HepG2 (cell line): ENCODE measurements at regions of chr6 and their contacts with region 1.

Region 1: GRCh38 chr6:63705707-63706106 is 70.1 kb downstream of the PHF3 start:
- DNase-seq: no peak
- ATAC-seq: no peak
- H3K4me3 ChIP-seq: no peak overlapping the region
- H3K27ac ChIP-seq: no peak overlapping the region
- H3K4me1 ChIP-seq: peaks cover 23% of the 10 kb centered on the region
- H3K27me3 ChIP-seq: no peaks in the 10 kb centered on the region
- CTCF ChIP-seq: no peak
- EP300 ChIP-seq: no peak
- POLR2A ChIP-seq: no peak
- RAD21 ChIP-seq: no peak

Region 2: GRCh38 chr6:63685446-63686379 is 20.0 kb before region 1 on chr6:
- CTCF ChIA-PET with region 1: no interaction called
- POLR2A ChIA-PET with region 1: no interaction called
- in situ Hi-C with region 1: no loop called
- intact Hi-C with region 1: loop called (anchors 2 kb)
- DNase-seq: no peak
- ATAC-seq: no peak
- H3K4me3 ChIP-seq: no peak overlapping the region
- H3K27ac ChIP-seq: no peak overlapping the region
- H3K4me1 ChIP-seq: no peaks in the 10 kb centered on the region
- H3K27me3 ChIP-seq: no peaks in the 10 kb centered on the region
- CTCF ChIP-seq: no peak
- EP300 ChIP-seq: no peak
- POLR2A ChIP-seq: no peak
- RAD21 ChIP-seq: no peak